ENCODE measurements at regions of chr6 and their contacts with region 1.

Region 1: DNA sequence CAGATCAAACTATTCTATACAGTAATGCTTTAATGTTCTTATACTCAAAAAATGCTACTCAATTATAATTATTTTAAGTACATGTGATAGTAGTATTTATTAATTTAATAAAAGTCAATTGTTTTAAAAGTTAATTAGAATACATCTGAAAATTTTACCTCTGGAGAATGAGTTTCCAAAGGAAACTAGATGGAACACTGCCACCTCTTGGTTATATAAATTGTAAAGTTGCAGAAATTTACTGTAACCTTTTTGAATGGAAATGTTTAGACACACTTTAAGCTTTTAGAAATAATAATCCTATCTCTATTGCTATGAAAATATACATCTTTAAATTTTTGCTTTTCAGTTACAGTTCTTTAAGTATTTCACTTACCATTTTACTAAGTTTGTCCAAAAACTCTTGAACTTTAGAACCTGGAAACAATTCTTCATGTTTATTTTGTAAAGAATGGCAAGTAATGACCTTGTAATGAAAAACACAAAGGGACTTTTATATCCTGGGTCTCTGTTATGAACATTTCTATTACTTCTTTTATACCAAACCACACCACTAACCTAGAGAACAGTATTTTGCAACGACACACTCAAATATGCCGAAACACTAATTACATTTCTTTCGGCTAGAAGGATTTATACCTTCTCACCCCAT is 10.9 kb upstream of the BMP5 start:
- DNase-seq: no peak
- ATAC-seq: no peak

Region 2: GRCh38 chr6:55445648-55446204 is 440.6 kb before region 1 on chr6:
- intact Hi-C with region 1: loop called (anchors 5 kb)
- DNase-seq: no peak
- ATAC-seq: no peak

Region 3: DNA sequence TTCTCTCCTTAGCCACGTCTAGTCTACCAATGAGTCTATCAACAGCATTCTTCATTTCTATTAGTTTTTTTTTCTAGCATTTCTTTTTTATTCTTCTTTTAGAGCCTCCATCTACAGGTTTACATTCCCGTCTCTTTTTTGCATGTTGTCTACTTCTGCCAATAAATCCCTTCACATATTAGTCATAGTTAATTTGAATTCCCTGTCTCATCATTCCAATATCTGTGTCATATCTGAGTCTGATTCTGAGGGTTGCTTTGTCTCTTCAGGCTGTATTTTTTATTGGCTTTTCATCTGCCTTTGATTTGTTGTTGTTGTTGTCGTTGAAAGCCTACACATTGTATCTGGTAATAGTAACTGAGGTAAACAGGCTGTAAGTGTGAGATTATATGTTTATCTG is 411.9 kb before region 1 on chr6:
- intact Hi-C with region 1: no loop called
- DNase-seq: no peak
- ATAC-seq: no peak

Region 4: DNA sequence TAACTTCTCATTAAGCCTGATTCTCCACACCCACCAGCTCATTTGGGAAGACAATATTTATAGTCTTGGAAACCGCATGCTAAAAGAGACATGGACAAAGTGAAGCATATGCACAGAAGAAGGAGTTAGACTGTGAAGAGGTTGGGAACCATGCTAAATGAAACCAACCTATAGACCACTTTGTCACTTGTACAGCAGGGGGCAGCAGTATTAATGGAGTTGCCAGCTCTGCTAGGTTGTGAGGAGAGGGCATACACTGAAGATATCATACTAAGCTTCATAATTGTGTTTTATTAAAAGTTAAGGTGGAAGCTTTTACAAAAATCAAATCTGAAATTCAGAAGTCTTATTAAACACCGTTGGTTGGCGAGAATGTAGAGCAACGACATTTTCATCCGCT is 269.0 kb before region 1 on chr6:
- intact Hi-C with region 1: loop called (anchors 2 kb)
- DNase-seq: no peak
- ATAC-seq: peak; percentile 49

Region 5: DNA sequence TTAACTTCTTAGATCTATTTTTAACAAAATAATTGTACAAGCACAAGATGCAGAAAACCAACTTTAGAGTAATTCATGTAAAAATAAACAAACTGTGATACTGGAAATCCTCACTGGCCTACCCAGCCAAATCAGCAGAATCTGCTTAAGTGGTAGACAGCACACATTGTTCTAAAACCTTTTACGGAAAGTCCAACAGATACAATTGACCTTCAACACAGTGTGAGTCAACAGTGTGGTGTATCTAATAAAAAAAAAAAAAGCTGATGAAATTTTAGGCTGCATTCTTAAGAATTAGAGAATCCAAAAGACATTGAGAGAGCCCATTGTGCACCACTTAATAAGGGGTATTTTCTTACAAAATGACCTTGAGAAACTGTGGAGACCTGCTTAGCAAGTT is 186.5 kb after region 1 on chr6:
- intact Hi-C with region 1: no loop called
- DNase-seq: no peak
- ATAC-seq: peak; percentile 80

Measured in left ventricle myocardium superior (tissue), 1 donor.